Endothelial cell of umbilical vein (primary cell): ENCODE measurements at regions of chr2 and their contacts with region 1.

Region 1: DNA sequence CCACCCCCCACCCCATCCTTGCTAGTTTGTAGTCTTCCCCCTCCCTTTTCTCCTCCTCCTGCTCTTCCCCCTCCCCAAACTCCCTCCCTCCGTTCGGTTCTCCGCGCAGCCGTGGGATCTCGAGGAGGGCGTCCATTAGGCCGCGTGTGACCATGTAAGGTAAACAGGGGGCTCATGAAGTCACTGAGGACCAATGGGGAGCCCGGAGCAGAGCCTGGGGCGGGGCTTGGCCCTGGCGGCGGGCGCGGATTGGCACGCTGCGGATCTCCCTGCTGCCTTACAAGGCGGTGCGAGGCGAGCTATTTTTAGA is 246 bp upstream of the KLF7 start:
- DNase-seq: peak; percentile 100
- H3K4me3 ChIP-seq: peak overlapping the region in 1 of 3 experiments; percentile 91
- H3K27ac ChIP-seq: peak overlapping the region; percentile 97
- H3K4me1 ChIP-seq: peaks cover 29% of the 10 kb centered on the region
- H3K27me3 ChIP-seq: no peaks in the 10 kb centered on the region
- CTCF ChIP-seq: no peak
- POLR2A ChIP-seq: no peak

Region 2: GRCh38 chr2:206981739-206982340 is 184.2 kb before region 1 on chr2:
- CTCF ChIA-PET with region 1: interaction called, 12 read pairs
- POLR2A ChIA-PET with region 1: interaction called, 3 read pairs
- dilution Hi-C with region 1: no loop called
- intact Hi-C with region 1: loop called (anchors 1 kb)
- DNase-seq: peak; percentile 79
- H3K4me3 ChIP-seq: no peak overlapping the region
- H3K27ac ChIP-seq: no peak overlapping the region
- H3K4me1 ChIP-seq: no peaks in the 10 kb centered on the region
- H3K27me3 ChIP-seq: peaks cover 0 to 5% of the 10 kb centered on the region in 2 experiments
- CTCF ChIP-seq: peak; percentile 83 to 88
- POLR2A ChIP-seq: no peak

Region 3: GRCh38 chr2:207073801-207074678 is 92.0 kb before region 1 on chr2:
- CTCF ChIA-PET with region 1: interaction called, 12 read pairs
- POLR2A ChIA-PET with region 1: interaction called, 18 read pairs
- dilution Hi-C with region 1: no loop called
- intact Hi-C with region 1: loop called (anchors 1 kb)
- DNase-seq: peak; percentile 70
- H3K4me3 ChIP-seq: peak overlapping the region in 2 of 3 experiments; percentile 2 to 12
- H3K27ac ChIP-seq: peak overlapping the region; percentile 22
- H3K4me1 ChIP-seq: peaks cover 23% of the 10 kb centered on the region
- H3K27me3 ChIP-seq: no peaks in the 10 kb centered on the region
- CTCF ChIP-seq: no peak
- POLR2A ChIP-seq: peak; percentile 63

Region 4: GRCh38 chr2:207097278-207097677 is 68.7 kb before region 1 on chr2:
- CTCF ChIA-PET with region 1: no interaction called
- POLR2A ChIA-PET with region 1: no interaction called
- dilution Hi-C with region 1: no loop called
- intact Hi-C with region 1: no loop called
- DNase-seq: no peak
- H3K4me3 ChIP-seq: no peak overlapping the region
- H3K27ac ChIP-seq: no peak overlapping the region
- H3K4me1 ChIP-seq: no peaks in the 10 kb centered on the region
- H3K27me3 ChIP-seq: no peaks in the 10 kb centered on the region
- CTCF ChIP-seq: no peak
- POLR2A ChIP-seq: no peak

Region 5: GRCh38 chr2:207143215-207144172 is 22.5 kb before region 1 on chr2:
- CTCF ChIA-PET with region 1: interaction called, 23 read pairs
- POLR2A ChIA-PET with region 1: interaction called, 22 read pairs
- dilution Hi-C with region 1: no loop called
- intact Hi-C with region 1: loop called (anchors 1 kb)
- DNase-seq: peak; percentile 91
- H3K4me3 ChIP-seq: peak overlapping the region in 1 of 3 experiments; percentile 51
- H3K27ac ChIP-seq: peak overlapping the region; percentile 88
- H3K4me1 ChIP-seq: peaks cover 36% of the 10 kb centered on the region
- H3K27me3 ChIP-seq: no peaks in the 10 kb centered on the region
- CTCF ChIP-seq: no peak
- POLR2A ChIP-seq: no peak

Region 6: DNA sequence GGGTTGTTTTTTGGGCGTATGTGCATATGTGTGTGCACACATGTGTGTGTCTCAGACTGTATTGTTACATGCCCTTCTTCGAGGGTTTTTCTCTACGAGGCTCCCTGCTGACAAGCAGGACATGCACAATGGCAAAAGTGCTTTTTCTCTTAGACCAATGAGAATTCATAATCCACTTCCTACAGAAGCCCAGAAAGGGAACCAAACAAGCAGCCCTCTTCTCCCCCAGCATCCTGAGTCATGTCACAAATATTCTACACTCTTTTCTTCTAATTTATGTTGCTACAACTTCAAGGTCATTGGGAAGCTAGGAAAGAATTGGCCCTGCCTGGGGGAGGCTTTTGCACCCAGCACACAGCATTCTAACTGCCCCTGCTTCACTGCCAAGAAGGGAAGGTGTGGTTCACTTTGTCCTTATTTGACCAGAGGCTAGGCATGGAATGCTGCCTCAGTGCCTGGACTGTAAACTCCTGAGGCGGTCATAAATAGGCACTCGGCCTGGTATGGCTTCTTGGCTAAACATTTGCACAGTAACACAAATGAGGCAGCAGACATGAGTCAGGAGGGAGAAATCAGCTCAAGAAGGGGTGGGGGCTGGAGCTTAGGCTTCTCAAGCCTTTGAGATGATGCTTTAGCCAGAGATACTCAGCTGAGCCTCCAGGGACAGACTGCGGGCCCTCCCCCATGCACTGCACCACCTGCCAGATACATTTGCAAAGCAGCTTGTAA is 92.4 kb after region 1 on chr2:
- CTCF ChIA-PET with region 1: interaction called, 4 read pairs
- POLR2A ChIA-PET with region 1: interaction called, 6 read pairs
- dilution Hi-C with region 1: no loop called
- intact Hi-C with region 1: loop called (anchors 1 kb)
- DNase-seq: peak; percentile 90
- H3K4me3 ChIP-seq: no peak overlapping the region
- H3K27ac ChIP-seq: peak overlapping the region; percentile 38
- H3K4me1 ChIP-seq: peaks cover 35% of the 10 kb centered on the region
- H3K27me3 ChIP-seq: no peaks in the 10 kb centered on the region
- CTCF ChIP-seq: no peak
- POLR2A ChIP-seq: no peak

Region 7: DNA sequence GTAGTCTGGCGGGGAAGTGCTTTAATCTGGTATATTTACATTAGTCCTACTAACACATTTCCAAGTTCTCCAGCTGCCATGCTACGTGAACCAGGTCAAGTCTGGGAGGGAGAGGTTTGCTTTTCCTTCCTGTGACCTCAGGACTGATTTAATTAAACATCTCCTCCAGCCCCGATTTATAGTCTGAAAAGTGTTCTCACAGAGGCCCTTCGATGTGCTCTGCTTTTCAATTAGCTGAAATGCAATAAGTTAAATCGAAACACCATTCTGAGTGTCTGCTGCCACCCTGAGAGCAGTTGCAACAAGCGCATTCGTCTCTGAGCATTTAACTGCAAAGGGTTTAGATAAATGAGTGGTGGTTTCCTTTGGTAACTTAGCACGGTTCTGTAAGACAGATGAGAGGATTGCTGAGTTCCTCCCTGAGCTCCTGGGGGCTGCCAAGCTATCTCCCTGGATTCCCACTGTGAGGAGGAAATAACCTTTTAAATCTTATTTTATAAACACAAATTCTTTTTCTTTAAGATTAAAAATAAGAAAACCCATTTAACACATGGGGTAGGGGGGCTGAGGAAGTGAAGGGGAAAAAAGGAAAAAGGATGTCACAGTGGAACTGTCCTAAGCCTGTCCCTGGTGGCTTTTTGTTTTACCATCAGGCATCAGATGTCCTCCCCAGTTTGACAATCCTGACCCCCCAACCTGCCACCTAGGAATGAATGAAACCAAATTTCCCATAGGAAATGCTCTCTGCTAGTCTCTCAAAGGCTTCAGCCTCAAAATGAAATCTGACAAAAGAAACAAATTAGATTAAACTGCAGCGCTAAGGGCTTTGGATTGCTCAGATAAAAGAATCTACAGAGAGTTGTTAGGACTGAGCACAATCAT is 307.3 kb after region 1 on chr2:
- CTCF ChIA-PET with region 1: interaction called, 39 read pairs
- POLR2A ChIA-PET with region 1: interaction called, 6 read pairs
- dilution Hi-C with region 1: no loop called
- intact Hi-C with region 1: loop called (anchors 1 kb)
- DNase-seq: peak; percentile 90
- H3K4me3 ChIP-seq: peak overlapping the region in 1 of 3 experiments; percentile 40
- H3K27ac ChIP-seq: peak overlapping the region; percentile 58
- H3K4me1 ChIP-seq: peaks cover 9% of the 10 kb centered on the region
- H3K27me3 ChIP-seq: no peaks in the 10 kb centered on the region
- CTCF ChIP-seq: peak; percentile 72 to 81
- POLR2A ChIP-seq: no peak